ENCODE measurements at regions of chrX and their contacts with region 1.

Region 1: DNA sequence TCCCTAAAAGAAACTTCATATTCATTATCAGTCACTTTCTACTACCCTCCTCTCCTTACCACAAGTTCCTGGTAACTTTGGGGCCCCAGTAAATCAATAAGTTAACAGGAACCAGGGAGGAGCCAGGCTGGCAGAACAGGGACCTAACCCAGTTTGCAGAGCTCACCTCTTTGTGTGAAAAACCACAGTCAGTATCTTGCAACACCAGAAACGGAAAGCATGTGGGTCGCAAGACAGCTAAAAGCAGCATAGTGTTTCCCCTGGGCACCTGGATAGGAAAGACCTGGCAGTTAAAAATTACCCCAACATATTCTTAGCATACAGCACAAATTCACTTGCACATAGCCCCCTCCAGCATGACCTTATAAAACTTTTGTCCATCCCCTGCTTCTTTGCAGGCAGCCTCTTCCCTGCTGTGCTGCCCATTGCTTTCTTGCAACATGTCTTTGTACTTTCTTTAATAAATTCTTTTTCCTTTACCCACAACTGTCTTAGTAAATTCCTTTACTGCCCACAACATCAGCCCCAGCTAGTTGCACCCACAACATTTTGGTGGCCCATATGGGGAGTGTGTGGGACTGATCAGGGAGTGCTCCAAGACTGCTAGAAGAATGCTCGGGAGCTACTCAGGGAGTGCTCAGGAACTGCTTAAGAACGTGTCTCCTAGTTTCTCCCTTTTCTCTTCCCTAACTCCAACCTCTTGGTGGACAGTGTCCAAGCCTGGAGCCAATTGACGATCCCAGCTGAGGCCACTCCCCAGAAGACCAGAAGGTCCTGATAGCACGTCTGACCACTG is 83.4 kb downstream of the MSN start:
- DNase-seq: peak; percentile 26
- H3K4me3 Mint-ChIP-seq: peak overlapping the region; percentile 1
- H3K27ac Mint-ChIP-seq: no peak overlapping the region
- H3K4me1 Mint-ChIP-seq: peaks cover 48% of the 10 kb centered on the region
- H3K27me3 Mint-ChIP-seq: no peaks in the 10 kb centered on the region

Region 2: DNA sequence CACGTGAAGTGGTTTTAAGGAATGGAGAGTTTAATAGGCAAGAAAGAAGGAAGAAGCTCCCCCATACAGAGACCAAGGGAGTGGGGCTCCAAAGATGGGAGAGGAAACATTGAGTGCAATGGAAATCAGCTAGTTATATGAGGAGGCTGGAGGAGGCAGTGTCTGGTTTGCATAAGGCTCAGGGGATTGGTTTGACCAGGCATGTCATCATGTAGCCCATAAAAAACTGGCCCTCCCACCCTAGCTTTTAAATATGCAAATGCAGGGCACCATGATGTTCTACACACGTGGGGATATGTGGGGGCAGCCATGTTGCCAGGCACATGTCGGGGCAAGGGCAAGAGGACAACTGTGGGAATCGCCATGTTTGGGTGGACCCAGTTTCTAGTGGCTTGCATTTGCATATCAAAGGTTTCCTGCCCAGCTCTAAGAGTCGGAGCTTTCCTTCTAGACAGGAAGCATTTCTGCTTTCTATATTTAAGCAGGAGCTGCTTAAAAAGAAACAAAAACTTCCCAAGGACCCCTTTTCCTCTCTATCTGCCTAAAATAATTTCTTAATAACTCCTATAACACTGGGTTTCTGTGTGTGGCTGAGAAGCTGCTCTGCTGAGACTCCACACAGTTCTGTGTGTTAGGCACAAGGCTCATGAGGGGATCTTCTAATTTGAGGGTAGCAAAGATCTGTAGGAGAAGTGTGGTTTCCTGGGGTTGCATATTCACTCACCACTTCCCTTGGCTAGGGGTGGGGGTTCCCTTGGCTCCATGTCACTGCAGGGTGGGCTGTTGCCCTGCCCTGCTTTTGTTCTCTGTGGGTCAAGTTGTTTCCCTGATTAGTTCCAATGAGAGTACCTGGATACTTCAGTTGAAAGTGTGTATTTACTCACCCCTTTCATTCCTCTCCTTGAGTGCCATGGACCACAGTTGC is 175.5 kb after region 1 on chrX:
- intact Hi-C with region 1: loop called (anchors 10 kb)
- DNase-seq: peak; percentile 47
- H3K4me3 Mint-ChIP-seq: no peak overlapping the region
- H3K27ac Mint-ChIP-seq: peak overlapping the region; percentile 67
- H3K4me1 Mint-ChIP-seq: peaks cover 41% of the 10 kb centered on the region
- H3K27me3 Mint-ChIP-seq: no peaks in the 10 kb centered on the region

Measured in activated T-helper 2 cell treated with anti-CD3 and anti-CD28 coated beads, Interferon-gamma antibody, Interleukin-2, Interleukin-4, amounts not matched to agents 10 μg/mL and 5 μg/mL and 100 μg/mL, durations not matched to agents 14 hours and 24 hours and 36 hours (primary cell).